ENCODE measurements at regions of chr12 and their contacts with region 1.

Region 1: GRCh38 chr12:111434680-111435338 is 29.1 kb downstream of the SH2B3 start:
- DNase-seq: peak; percentile 68 to 96 (median 82)
- ATAC-seq: peak; percentile 73
- H3K4me3 ChIP-seq: peak overlapping the region; percentile 43
- H3K4me3 Mint-ChIP-seq: peak overlapping the region; percentile 90
- H3K27ac ChIP-seq: peak overlapping the region; percentile 93 to 97
- H3K27ac Mint-ChIP-seq: peak overlapping the region; percentile 100
- H3K4me1 ChIP-seq: peaks cover 97% of the 10 kb centered on the region
- H3K4me1 Mint-ChIP-seq: peaks cover 93% of the 10 kb centered on the region
- H3K27me3 ChIP-seq: no peaks in the 10 kb centered on the region
- H3K27me3 Mint-ChIP-seq: no peaks in the 10 kb centered on the region
- CTCF ChIP-seq: no peak

Region 2: DNA sequence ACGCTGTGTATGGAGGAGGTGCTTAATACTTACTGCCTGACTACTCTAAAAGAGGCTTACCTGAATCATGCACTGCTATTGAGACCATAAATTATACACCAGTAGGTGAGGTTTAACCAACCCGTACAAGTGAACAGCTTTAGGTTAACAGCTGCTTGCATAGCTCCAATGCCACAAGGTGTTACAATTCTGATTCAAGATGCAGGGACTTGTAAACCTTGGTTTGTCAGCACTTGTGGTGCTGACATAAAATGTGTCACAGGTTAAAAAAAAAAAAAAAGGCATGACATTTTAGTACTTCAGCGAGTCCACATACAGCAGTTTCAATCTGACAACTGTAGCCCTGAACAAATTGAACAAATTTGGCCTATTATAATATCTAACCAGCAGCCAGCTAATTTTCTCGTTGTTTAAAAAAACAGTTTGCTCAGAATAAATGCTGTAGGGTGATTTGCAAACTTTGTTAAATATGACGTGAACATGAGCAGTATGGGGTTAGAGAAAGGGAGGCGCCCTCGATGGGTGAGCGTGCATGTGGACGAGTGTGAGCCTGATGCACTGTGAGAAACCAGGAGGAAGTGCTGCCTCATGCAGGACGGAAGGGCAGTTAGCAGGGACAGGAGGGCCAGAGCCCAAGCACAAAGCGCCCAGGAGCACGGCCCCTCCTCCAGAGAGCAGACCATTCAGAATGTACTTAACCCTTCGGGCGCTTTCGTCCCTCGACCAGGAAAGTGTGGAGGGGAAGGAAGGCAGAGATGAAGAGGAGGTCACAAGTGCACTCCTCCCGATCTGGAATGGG is 1490.0 kb before region 1 on chr12:
- CTCF ChIA-PET with region 1: no interaction called
- POLR2A ChIA-PET with region 1: no interaction called
- intact Hi-C with region 1: no loop called
- DNase-seq: no peak
- ATAC-seq: no peak
- H3K4me3 ChIP-seq: no peak overlapping the region
- H3K4me3 Mint-ChIP-seq: no peak overlapping the region
- H3K27ac ChIP-seq: no peak overlapping the region
- H3K27ac Mint-ChIP-seq: peak overlapping the region; percentile 24
- H3K4me1 ChIP-seq: peaks cover 20% of the 10 kb centered on the region
- H3K4me1 Mint-ChIP-seq: peaks cover 29% of the 10 kb centered on the region
- H3K27me3 ChIP-seq: no peaks in the 10 kb centered on the region
- H3K27me3 Mint-ChIP-seq: no peaks in the 10 kb centered on the region
- CTCF ChIP-seq: no peak

Region 3: DNA sequence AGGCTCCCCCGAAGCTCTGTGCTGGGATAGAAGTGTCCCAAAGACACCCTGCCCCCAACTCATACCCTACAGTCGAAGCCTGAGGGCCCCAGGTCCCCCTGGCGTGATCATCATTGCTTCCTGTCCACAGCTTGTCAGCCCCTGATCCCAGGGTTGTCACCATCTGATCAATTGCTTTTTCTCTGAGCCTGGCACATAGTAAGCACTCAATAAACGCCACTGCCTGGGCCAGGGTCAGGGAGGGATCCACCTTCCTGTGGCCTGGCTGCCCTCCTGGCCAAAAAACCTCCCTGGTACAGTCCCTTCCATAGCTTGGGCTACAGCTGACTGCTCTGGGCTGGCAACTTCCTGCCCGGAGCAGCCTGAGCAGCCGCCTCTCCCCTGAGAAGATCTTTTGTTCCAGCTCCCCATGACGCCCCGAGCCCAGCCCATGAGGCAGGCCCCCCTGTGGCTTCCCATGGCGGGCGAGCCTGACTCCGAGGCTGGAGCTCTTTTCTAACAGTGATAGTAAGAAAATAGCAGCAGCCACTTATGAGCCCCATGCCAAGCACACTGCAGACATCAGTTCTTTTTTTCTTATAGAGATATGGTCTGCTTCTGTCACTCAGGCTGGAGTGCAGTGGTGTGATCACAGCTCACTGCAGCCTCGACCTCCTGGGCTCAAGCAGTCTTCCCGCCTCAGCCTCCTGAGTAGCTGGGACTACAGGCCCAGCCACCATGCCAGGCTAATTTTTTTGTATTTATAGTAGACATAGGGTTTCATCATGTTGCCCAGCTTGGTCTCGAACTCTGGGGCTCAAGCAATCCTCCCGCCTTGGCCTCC is 22.6 kb before region 1 on chr12:
- CTCF ChIA-PET with region 1: interaction called, 487 read pairs
- POLR2A ChIA-PET with region 1: interaction called, 66 read pairs
- intact Hi-C with region 1: no loop called
- DNase-seq: peak in 3 of 14 experiments; percentile 29 to 48 (median 38)
- ATAC-seq: peak; percentile 51
- H3K4me3 ChIP-seq: no peak overlapping the region
- H3K4me3 Mint-ChIP-seq: peak overlapping the region; percentile 83
- H3K27ac ChIP-seq: peak overlapping the region; percentile 39 to 67
- H3K27ac Mint-ChIP-seq: peak overlapping the region; percentile 82
- H3K4me1 ChIP-seq: peaks cover 82% of the 10 kb centered on the region
- H3K4me1 Mint-ChIP-seq: peaks cover 77% of the 10 kb centered on the region
- H3K27me3 ChIP-seq: no peaks in the 10 kb centered on the region
- H3K27me3 Mint-ChIP-seq: no peaks in the 10 kb centered on the region
- CTCF ChIP-seq: no peak

Region 4: DNA sequence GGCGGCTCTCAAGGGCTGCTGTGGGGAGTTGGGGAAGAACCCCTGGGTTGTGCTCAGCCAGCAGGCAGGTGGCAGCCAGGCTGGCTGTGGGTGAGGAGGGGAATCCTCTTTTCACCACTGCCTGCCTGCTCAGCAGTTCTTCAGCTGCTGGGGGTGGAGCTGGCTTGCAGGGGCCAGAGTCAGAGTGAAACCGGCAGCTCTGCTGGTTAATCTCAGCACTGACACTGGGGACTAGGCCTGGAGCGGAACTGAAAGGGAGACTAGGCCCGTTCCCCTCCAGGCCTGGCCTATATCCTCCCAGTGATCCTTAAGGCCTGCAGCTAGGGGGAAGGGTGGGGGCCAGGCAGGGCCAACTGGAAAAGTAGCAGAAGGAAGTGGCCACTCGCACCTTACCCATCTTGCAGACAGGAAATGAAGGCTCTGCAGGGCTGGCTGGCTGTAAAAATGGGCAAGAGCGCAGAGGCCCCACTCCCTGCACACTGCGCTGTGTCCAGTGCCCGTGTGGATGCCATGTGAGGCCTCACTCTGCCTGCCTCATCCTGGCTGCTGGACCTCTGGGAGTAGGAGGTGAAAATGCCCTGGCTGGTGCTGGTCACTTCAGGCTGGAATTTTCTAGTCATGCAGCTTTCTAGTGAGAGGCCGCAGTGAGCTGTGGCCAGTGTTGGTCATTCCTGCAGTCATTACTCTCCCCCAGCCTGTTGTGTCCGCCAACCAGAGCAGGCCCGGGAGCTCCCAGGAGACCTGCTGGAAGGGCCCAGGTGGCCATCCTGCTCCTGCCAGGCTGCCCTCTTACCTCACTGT is 10.3 kb after region 1 on chr12:
- CTCF ChIA-PET with region 1: interaction called, 36 read pairs
- POLR2A ChIA-PET with region 1: interaction called, 87 read pairs
- intact Hi-C with region 1: loop called in 1 of 2 experiments (anchors 1 kb)
- DNase-seq: peak; percentile 58 to 95 (median 73)
- ATAC-seq: peak; percentile 96
- H3K4me3 ChIP-seq: peak overlapping the region; percentile 12
- H3K4me3 Mint-ChIP-seq: peak overlapping the region; percentile 65
- H3K27ac ChIP-seq: peak overlapping the region; percentile 74 to 80
- H3K27ac Mint-ChIP-seq: peak overlapping the region; percentile 82
- H3K4me1 ChIP-seq: peaks cover 76% of the 10 kb centered on the region
- H3K4me1 Mint-ChIP-seq: peaks cover 64% of the 10 kb centered on the region
- H3K27me3 ChIP-seq: no peaks in the 10 kb centered on the region
- H3K27me3 Mint-ChIP-seq: no peaks in the 10 kb centered on the region
- CTCF ChIP-seq: no peak

Measured in CD4-positive, alpha-beta T cell (primary cell).